PC-9 (cell line): ENCODE measurements at regions of chr6 and their contacts with region 1.

Region 1: DNA sequence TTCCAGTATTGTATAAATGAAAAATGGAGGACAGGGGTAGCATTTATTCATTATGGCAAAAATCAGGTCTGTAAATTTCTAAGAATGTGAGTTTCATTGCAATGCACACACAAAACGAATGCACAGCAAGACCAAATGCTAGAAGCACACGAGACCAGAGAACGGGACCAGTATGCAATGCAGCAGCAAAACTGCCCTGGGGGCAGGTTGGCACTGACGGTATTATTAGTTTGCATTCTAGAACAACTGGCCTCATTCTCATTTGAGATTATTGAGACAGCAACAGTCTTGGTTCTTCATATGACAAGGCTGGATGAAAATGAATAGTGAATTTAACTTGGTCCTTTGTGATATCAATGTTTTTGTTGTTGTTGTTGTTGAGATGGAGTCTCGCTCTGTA is 9.0 kb upstream of the MTRES1 start:
- DNase-seq: no peak
- H3K4me3 ChIP-seq: no peak overlapping the region
- H3K27ac ChIP-seq: no peak overlapping the region
- H3K4me1 ChIP-seq: peaks cover 10% of the 10 kb centered on the region
- H3K27me3 ChIP-seq: no peaks in the 10 kb centered on the region
- CTCF ChIP-seq: no peak

Region 2: GRCh38 chr6:106561686-106562405 is 457.2 kb before region 1 on chr6:
- CTCF ChIA-PET with region 1: interaction called, 11 read pairs
- POLR2A ChIA-PET with region 1: no interaction called
- intact Hi-C with region 1: no loop called
- DNase-seq: peak in 1 of 2 experiments; percentile 42
- H3K4me3 ChIP-seq: 0 out of 2 replicates have a peak overlapping the region, but pooled peaks have one; percentile 15
- H3K27ac ChIP-seq: peak overlapping the region; percentile 59
- H3K4me1 ChIP-seq: peaks cover 35% of the 10 kb centered on the region
- H3K27me3 ChIP-seq: no peaks in the 10 kb centered on the region
- CTCF ChIP-seq: no peak

Region 3: DNA sequence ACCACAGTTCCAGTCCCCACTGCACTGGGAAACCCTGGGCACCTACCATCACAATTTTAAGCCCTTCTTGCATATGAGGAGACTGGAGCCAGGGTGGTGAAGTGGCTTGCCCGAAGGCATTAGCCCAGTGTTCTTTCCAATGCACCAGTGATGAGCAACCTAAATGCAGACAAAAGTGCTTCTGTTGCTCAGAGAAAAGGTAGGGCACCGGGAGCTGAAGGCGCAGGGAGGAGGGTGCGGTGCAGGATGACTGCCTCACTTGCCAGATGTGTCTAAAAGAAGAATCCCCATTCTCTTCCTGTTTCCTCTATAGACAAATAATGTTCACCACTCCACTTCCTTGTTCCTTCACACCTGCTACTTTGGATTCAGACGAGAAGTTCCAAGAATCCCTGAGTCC is 303.1 kb before region 1 on chr6:
- CTCF ChIA-PET with region 1: no interaction called
- POLR2A ChIA-PET with region 1: no interaction called
- intact Hi-C with region 1: no loop called
- DNase-seq: no peak
- H3K4me3 ChIP-seq: no peak overlapping the region
- H3K27ac ChIP-seq: no peak overlapping the region
- H3K4me1 ChIP-seq: no peaks in the 10 kb centered on the region
- H3K27me3 ChIP-seq: no peaks in the 10 kb centered on the region
- CTCF ChIP-seq: no peak

Region 4: GRCh38 chr6:106974999-106975737 is 43.9 kb before region 1 on chr6:
- CTCF ChIA-PET with region 1: no interaction called
- POLR2A ChIA-PET with region 1: no interaction called
- intact Hi-C with region 1: no loop called
- DNase-seq: peak; percentile 44 to 77
- H3K4me3 ChIP-seq: peak overlapping the region; percentile 88
- H3K27ac ChIP-seq: peak overlapping the region; percentile 71
- H3K4me1 ChIP-seq: peaks cover 14% of the 10 kb centered on the region
- H3K27me3 ChIP-seq: no peaks in the 10 kb centered on the region
- CTCF ChIP-seq: peak; percentile 36; the same call in 1 of the 2 replicates

Region 5: GRCh38 chr6:107080036-107080435 is 61.0 kb after region 1 on chr6:
- CTCF ChIA-PET with region 1: no interaction called
- POLR2A ChIA-PET with region 1: no interaction called
- intact Hi-C with region 1: no loop called
- DNase-seq: no peak
- H3K4me3 ChIP-seq: no peak overlapping the region
- H3K27ac ChIP-seq: no peak overlapping the region
- H3K4me1 ChIP-seq: no peaks in the 10 kb centered on the region
- H3K27me3 ChIP-seq: no peaks in the 10 kb centered on the region
- CTCF ChIP-seq: peak; percentile 26; the same call in 1 of the 2 replicates